Body of pancreas (tissue), 4 donors: ENCODE measurements at regions of chr2 and their contacts with region 1.

Region 1: DNA sequence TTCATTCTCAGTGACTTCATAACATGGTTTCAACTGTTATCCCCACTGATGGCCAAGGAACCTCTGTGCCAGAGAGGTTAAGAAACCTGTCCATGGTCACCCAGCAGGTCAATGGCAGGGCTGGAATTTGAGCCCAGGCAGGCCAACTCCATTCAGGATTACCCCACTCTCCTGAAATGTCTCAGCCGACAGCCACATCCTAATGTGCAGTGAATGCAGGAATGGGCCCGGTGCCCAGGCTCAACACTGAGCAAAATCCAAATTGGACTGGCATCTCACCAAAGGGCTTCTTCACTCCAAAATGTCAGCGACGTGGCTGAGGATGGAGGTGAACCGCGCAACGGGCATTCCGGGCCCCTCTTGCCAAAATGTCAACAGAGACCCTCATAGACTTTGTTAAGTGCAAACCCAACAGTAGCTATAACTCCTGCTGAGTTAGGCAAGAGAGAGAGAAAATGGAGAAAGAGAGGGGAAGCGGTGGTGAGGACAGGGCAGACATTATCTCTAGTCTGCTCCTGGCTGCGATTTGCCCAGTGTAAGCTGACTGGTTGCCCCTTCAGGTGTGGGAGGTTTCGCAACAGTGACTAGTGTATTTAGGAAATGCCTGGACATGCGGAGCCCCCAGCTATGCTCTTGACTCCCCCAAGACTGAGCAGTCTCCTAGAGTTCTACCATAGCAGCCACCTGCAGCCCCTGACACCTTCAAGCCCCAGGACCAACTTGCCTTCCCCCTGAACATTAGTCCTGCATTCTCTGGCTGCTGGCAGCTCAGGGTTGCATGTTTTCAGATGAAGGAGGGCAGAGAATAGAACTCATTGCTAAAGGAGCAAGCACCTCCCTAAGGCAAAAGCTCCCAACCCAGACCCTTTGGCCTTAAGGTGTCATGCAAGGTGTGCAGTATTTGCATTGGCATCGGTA is 167.7 kb downstream of the ANAPC1 start:
- DNase-seq: no peak
- ATAC-seq: no peak
- H3K4me3 ChIP-seq: no peak overlapping the region
- H3K27ac ChIP-seq: no peak overlapping the region
- H3K4me1 ChIP-seq: no peaks in the 10 kb centered on the region
- H3K27me3 ChIP-seq: no peaks in the 10 kb centered on the region
- CTCF ChIP-seq: no peak
- POLR2A ChIP-seq: no peak

Region 2: DNA sequence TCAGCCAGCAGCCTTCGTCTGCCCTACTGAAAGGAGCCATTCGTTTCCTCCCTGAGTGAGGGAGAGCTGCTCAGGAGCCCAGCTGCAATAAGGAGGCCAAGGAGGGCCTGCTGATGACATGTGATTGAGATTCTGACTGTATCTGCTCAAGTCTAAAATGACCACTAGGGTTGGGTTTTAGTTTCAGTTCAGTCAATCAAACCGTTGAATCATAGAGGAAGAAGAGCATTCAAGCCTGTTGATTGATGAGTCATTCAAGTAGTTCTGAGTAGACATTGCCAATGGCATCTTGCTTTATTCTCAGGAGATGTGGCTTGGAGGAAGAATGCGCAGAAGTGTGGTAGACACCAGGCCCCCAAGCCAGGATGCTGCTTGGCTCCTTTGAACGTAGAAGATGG is 615.5 kb before region 1 on chr2:
- intact Hi-C with region 1: loop called (anchors 10 kb)
- DNase-seq: no peak
- ATAC-seq: no peak
- H3K4me3 ChIP-seq: no peak overlapping the region
- H3K27ac ChIP-seq: no peak overlapping the region
- H3K4me1 ChIP-seq: no peaks in the 10 kb centered on the region
- H3K27me3 ChIP-seq: no peaks in the 10 kb centered on the region
- CTCF ChIP-seq: peak in 1 of 7 experiments; percentile 5
- POLR2A ChIP-seq: no peak

Region 3: GRCh38 chr2:112004253-112004645 is 288.0 kb after region 1 on chr2:
- intact Hi-C with region 1: no loop called
- DNase-seq: peak in 3 of 4 donors; percentile 18 to 77 (median 29)
- ATAC-seq: no peak
- H3K4me3 ChIP-seq: no peak overlapping the region
- H3K27ac ChIP-seq: peak overlapping the region in 1 of 4 donors; percentile 52
- H3K4me1 ChIP-seq: no peaks in the 10 kb centered on the region
- H3K27me3 ChIP-seq: no peaks in the 10 kb centered on the region
- CTCF ChIP-seq: no peak
- POLR2A ChIP-seq: no peak

Region 4: DNA sequence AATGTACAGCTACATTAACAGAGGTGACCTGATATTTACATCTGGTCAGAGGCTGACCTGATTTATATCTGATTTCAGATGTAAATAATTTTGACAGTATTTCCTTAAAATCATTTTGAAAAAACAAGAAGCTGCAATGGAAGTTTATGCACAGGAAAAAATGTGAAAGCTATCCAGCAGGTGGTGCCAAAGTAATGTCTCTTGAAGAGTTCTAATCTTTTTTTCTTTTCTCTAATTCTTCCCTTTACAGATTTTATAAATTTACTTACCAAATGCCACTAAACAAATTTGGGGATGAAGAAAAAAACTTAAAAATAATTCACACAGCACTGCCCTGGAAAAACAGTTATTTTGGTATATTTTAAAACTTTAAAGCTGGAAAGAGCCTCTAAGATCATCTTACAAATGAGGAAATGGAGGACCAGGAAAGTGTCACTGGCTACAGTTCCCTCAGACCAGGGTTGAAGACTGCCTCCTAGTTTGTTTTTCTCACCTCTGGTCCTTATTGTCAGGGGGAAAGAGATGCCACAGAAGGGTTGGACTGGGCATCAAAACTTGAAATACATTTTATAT is 405.5 kb after region 1 on chr2:
- intact Hi-C with region 1: no loop called
- DNase-seq: peak; percentile 27 to 59 (median 44)
- ATAC-seq: no peak
- H3K4me3 ChIP-seq: no peak overlapping the region
- H3K27ac ChIP-seq: no peak overlapping the region
- H3K4me1 ChIP-seq: no peaks in the 10 kb centered on the region
- H3K27me3 ChIP-seq: no peaks in the 10 kb centered on the region
- CTCF ChIP-seq: peak; percentile 32 to 64 (median 55)
- POLR2A ChIP-seq: no peak